ENCODE measurements at regions of chr7 and their contacts with region 1.

Region 1: DNA sequence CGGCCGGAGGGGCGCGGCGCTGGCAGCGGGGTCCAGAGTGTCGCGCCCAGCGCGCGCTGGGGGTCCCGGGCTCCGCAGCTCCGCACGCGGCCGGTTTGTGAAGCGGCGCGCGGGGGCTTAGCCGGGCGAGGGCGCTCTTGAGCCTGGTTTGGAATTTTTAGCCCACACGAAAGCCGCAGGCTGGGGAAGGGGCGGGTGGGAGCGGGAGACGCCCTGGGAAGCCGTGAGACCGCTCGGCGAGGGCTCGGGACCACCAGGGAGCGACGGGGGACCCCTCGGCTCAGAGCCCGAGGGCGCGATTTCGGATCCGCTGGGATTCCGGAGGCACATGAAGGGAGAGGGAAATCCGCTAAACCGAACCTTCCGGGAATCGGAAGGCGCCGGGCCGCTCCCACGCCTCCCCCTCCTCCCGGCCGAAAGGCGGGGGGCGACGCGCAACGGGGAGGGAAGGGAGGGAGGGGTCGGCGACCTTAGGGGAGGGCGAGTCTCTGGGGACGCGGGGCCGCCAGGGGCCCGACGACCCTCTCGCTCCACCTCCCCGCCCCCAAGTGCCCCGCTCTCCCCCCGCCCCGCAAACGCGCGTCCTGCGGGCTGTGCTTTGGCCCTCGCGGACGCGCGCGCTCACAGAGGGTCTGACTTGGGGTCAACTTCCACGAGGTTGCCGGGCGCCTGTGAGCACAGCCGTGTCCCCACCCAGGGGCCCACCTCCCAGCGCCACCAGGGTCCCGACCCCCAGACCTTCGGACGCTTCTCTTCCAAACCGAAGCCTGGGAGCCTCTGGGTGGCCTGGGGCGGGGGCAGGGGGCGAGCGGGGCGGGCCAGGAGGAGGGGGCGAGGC is 5.1 kb upstream of the ELFN1 start:
- DNase-seq: peak; percentile 18
- ATAC-seq: peak; percentile 77
- H3K4me3 ChIP-seq: peak overlapping the region; percentile 42 to 54
- H3K27ac ChIP-seq: no peak overlapping the region
- H3K4me1 ChIP-seq: peaks cover 0 to 19% of the 10 kb centered on the region in 2 experiments; a peak in 2 of 4 replicates
- H3K27me3 ChIP-seq: no peaks in the 10 kb centered on the region
- CTCF ChIP-seq: peak; percentile 74 to 95 (median 83)
- POLR2A ChIP-seq: no peak
- RAD21 ChIP-seq: peak; percentile 79

Region 2: GRCh38 chr7:1758028-1758858 is 93.3 kb after region 1 on chr7:
- CTCF ChIA-PET with region 1: interaction called, 3 read pairs
- POLR2A ChIA-PET with region 1: no interaction called
- RAD21 ChIA-PET with region 1: interaction called, 3 read pairs
- intact Hi-C with region 1: loop called (anchors 1 kb)
- DNase-seq: peak; percentile 56
- ATAC-seq: peak; percentile 91
- H3K4me3 ChIP-seq: no peak overlapping the region
- H3K27ac ChIP-seq: no peak overlapping the region
- H3K4me1 ChIP-seq: peaks cover 0 to 4% of the 10 kb centered on the region in 2 experiments; a peak in 1 of 4 replicates
- H3K27me3 ChIP-seq: peaks cover 3% of the 10 kb centered on the region; the same call in 1 of the 2 replicates
- CTCF ChIP-seq: peak; percentile 34 to 60 (median 51); a peak in 5 of 6 replicates
- POLR2A ChIP-seq: no peak
- RAD21 ChIP-seq: peak; percentile 53; the same call in 1 of the 2 replicates

Region 3: DNA sequence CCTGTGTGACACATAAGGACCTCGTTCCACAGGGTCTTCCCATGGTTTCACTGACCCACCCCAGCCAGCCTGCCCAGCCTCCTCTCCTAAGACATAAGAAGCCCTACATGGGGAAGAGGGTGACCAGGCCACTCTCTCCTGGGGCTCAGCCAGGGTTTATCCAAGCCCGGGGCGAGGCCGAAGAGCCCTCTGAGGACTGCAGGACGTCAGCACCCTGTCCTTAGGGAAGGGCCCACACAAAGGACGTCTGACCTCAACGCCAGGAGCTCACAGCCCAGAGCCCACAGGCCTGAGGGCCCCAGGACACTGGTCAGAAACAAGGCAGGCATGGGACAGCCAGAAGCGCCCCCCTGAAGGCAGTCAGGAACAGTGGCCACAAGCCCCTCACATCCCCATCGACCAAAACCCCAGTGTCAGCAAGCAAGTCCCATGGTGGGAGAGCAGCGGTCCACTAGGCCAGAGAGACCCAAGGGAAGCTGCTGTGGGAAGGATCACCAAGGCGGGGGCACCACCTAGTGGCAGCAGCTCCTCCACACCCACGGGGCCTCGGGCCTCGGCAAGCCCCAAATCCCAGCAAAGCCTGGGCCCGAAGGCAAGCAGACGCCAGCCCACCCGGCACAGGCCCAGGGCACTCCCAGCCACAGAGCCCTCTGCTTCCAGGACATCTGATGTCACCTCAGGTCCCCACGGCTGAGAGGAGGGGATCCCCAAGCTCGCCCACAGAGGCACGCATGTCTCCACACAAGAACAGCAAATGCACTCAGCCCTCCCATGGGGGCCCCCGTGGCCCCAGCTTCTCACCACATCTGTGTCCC is 544.4 kb after region 1 on chr7:
- CTCF ChIA-PET with region 1: interaction called, 4 read pairs
- POLR2A ChIA-PET with region 1: no interaction called
- RAD21 ChIA-PET with region 1: no interaction called
- intact Hi-C with region 1: loop called (anchors 2 kb)
- DNase-seq: no peak
- ATAC-seq: peak; percentile 89
- H3K4me3 ChIP-seq: no peak overlapping the region
- H3K27ac ChIP-seq: no peak overlapping the region
- H3K4me1 ChIP-seq: no peaks in the 10 kb centered on the region
- H3K27me3 ChIP-seq: no peaks in the 10 kb centered on the region
- CTCF ChIP-seq: peak; percentile 44 to 64 (median 58); a peak in 5 of 6 replicates
- POLR2A ChIP-seq: no peak
- RAD21 ChIP-seq: peak; percentile 86

Region 4: GRCh38 chr7:3282457-3282856 is 1617.5 kb after region 1 on chr7:
- CTCF ChIA-PET with region 1: interaction called, 10 read pairs
- POLR2A ChIA-PET with region 1: no interaction called
- RAD21 ChIA-PET with region 1: no interaction called
- intact Hi-C with region 1: no loop called
- DNase-seq: no peak
- ATAC-seq: no peak
- H3K4me3 ChIP-seq: no peak overlapping the region
- H3K27ac ChIP-seq: no peak overlapping the region
- H3K4me1 ChIP-seq: no peaks in the 10 kb centered on the region
- H3K27me3 ChIP-seq: no peaks in the 10 kb centered on the region
- CTCF ChIP-seq: no peak
- POLR2A ChIP-seq: no peak
- RAD21 ChIP-seq: no peak

Measured in HCT116 (cell line).